ENCODE measurements at regions of chr9 and their contacts with region 1.

Region 1: GRCh38 chr9:113876151-113876992 is at the start of gene ZNF618:
- DNase-seq: peak; percentile 24 to 73 (median 44)
- ATAC-seq: peak in 3 of 4 donors; percentile 32 to 83 (median 64)
- H3K4me3 ChIP-seq: peak within 1 kb of the TSS; percentile 71 to 97 (median 84)
- H3K27ac ChIP-seq: peak within 1 kb of the TSS in 10 of 12 donors; percentile 39 to 86 (median 66)
- H3K4me1 ChIP-seq: peaks cover 0 to 37% (median 7%) of the 10 kb centered on the region in 12 donors
- H3K27me3 ChIP-seq: no peaks in the 10 kb centered on the region
- CTCF ChIP-seq: peak; percentile 17 to 59 (median 38)
- POLR2A ChIP-seq: no peak
- total RNA-seq, gene ZNF618: 0.81 to 4.2 (median 2.0) TPM

Region 2: GRCh38 chr9:113993838-113994540 is 117.6 kb after region 1 on chr9:
- intact Hi-C with region 1: loop called in 1 of 10 experiments (anchors 10 kb)
- DNase-seq: peak; percentile 86 to 93 (median 86)
- ATAC-seq: peak; percentile 89 to 92 (median 90)
- H3K4me3 ChIP-seq: no peak overlapping the region
- H3K27ac ChIP-seq: peak overlapping the region in 2 of 12 donors; percentile 34 to 56
- H3K4me1 ChIP-seq: peaks cover 8 to 61% (median 38%) of the 10 kb centered on the region in 12 donors
- H3K27me3 ChIP-seq: no peaks in the 10 kb centered on the region
- CTCF ChIP-seq: no peak
- POLR2A ChIP-seq: no peak

Region 3: GRCh38 chr9:114004221-114004716 is 127.9 kb after region 1 on chr9:
- intact Hi-C with region 1: loop called in 2 of 10 experiments (anchors 5 to 10 kb)
- DNase-seq: peak; percentile 77 to 87 (median 78)
- ATAC-seq: peak; percentile 80 to 96 (median 90)
- H3K4me3 ChIP-seq: peak overlapping the region in 7 of 12 donors; percentile 6 to 34 (median 18)
- H3K27ac ChIP-seq: peak overlapping the region; percentile 10 to 85 (median 70)
- H3K4me1 ChIP-seq: peaks cover 0 to 27% (median 18%) of the 10 kb centered on the region in 12 donors
- H3K27me3 ChIP-seq: no peaks in the 10 kb centered on the region
- CTCF ChIP-seq: no peak
- POLR2A ChIP-seq: no peak

Measured in heart left ventricle (tissue), 16 donors.